K562 (cell line): ENCODE measurements at regions of chr16 and their contacts with region 1.

Region 1: GRCh38 chr16:31202414-31203375 is at the start of gene PYCARD:
- DNase-seq: peak; percentile 41 to 59 (median 57)
- ATAC-seq: peak; percentile 22
- H3K4me3 ChIP-seq: peak within 1 kb of the TSS; percentile 45
- H3K27ac ChIP-seq: no peak within 1 kb of the TSS; the same call in 2 of the 3 replicates
- H3K4me1 ChIP-seq: peaks cover 20 to 33% of the 10 kb centered on the region in 2 experiments
- H3K27me3 ChIP-seq: peaks cover 0 to 6% of the 10 kb centered on the region in 2 experiments; a peak in 2 of 5 replicates
- CTCF ChIP-seq: no peak
- EP300 ChIP-seq: no peak
- POLR2A ChIP-seq: no peak
- RAD21 ChIP-seq: no peak
- polyA plus RNA-seq, gene PYCARD: 1.3 to 1.6 TPM

Region 2: GRCh38 chr16:31188450-31189411 is 14.0 kb before region 1 on chr16:
- CTCF ChIA-PET with region 1: no interaction called
- POLR2A ChIA-PET with region 1: interaction called, 18 read pairs
- in situ Hi-C with region 1: no loop called
- intact Hi-C with region 1: no loop called
- DNase-seq: no peak
- ATAC-seq: no peak
- H3K4me3 ChIP-seq: no peak overlapping the region
- H3K27ac ChIP-seq: no peak overlapping the region
- H3K4me1 ChIP-seq: peaks cover 0 to 3% of the 10 kb centered on the region in 2 experiments; a peak in 3 of 5 replicates
- H3K27me3 ChIP-seq: no peaks in the 10 kb centered on the region
- CTCF ChIP-seq: no peak
- EP300 ChIP-seq: no peak
- POLR2A ChIP-seq: peak; percentile 49
- RAD21 ChIP-seq: no peak

Region 3: GRCh38 chr16:31253642-31254045 is 50.9 kb after region 1 on chr16:
- CTCF ChIA-PET with region 1: no interaction called
- POLR2A ChIA-PET with region 1: interaction called, 5 read pairs
- in situ Hi-C with region 1: no loop called
- intact Hi-C with region 1: loop called (anchors 2 kb)
- DNase-seq: peak; percentile 74 to 95 (median 84)
- ATAC-seq: peak; percentile 98
- H3K4me3 ChIP-seq: no peak overlapping the region
- H3K27ac ChIP-seq: peak overlapping the region; percentile 52
- H3K4me1 ChIP-seq: peaks cover 23 to 29% of the 10 kb centered on the region in 2 experiments
- H3K27me3 ChIP-seq: no peaks in the 10 kb centered on the region
- CTCF ChIP-seq: no peak; a peak in 1 of 6 replicates
- EP300 ChIP-seq: peak; percentile 88
- POLR2A ChIP-seq: no peak
- RAD21 ChIP-seq: no peak; a peak in 1 of 4 replicates

Region 4: GRCh38 chr16:31301708-31302400 is 99.2 kb after region 1 on chr16:
- CTCF ChIA-PET with region 1: interaction called, 3 read pairs
- POLR2A ChIA-PET with region 1: interaction called, 3 read pairs
- in situ Hi-C with region 1: no loop called
- intact Hi-C with region 1: loop called (anchors 2 kb)
- DNase-seq: peak in 3 of 4 experiments; percentile 13 to 24 (median 14)
- ATAC-seq: peak; percentile 84
- H3K4me3 ChIP-seq: no peak overlapping the region
- H3K27ac ChIP-seq: no peak overlapping the region
- H3K4me1 ChIP-seq: peaks cover 0 to 5% of the 10 kb centered on the region in 2 experiments; a peak in 1 of 5 replicates
- H3K27me3 ChIP-seq: peaks cover 3 to 4% of the 10 kb centered on the region in 2 experiments; a peak in 1 of 5 replicates
- CTCF ChIP-seq: no peak
- EP300 ChIP-seq: no peak
- POLR2A ChIP-seq: no peak
- RAD21 ChIP-seq: peak in 1 of 2 experiments; percentile 10; a peak in 1 of 4 replicates

Region 5: DNA sequence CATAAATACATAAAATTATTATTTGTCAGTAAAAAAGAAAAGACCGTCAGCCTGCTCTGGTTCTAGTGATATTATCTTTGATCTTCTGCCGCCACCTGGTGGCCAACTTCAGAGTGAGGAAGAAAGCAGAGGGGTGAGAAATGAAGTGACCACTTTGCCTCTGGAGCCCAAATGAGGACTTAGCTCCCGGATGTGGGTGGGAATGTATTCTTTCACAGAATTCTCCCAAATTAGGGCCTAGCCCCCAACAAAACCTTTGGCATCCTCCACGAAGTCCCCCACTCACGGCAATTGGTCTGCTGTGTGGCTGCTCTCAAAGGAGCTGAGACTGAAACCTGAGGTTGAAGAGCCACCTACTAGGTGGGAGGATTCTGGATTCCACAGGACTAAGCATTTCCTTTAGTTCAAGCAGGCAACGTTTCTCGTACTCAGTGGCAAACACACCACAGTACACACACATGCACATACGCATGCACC is 666.0 kb after region 1 on chr16:
- CTCF ChIA-PET with region 1: no interaction called
- POLR2A ChIA-PET with region 1: no interaction called
- in situ Hi-C with region 1: no loop called
- intact Hi-C with region 1: loop called (anchors 10 kb)
- DNase-seq: peak; percentile 66 to 85 (median 70)
- ATAC-seq: peak; percentile 85
- H3K4me3 ChIP-seq: no peak overlapping the region
- H3K27ac ChIP-seq: no peak overlapping the region
- H3K4me1 ChIP-seq: no peaks in the 10 kb centered on the region; a peak in 4 of 5 replicates
- H3K27me3 ChIP-seq: peaks cover 0 to 4% of the 10 kb centered on the region in 2 experiments; a peak in 1 of 5 replicates
- CTCF ChIP-seq: peak; percentile 69 to 77 (median 75)
- EP300 ChIP-seq: no peak
- POLR2A ChIP-seq: no peak
- RAD21 ChIP-seq: peak; percentile 67 to 73